A673 (cell line): ENCODE measurements at regions of chr11 and their contacts with region 1.

Region 1: DNA sequence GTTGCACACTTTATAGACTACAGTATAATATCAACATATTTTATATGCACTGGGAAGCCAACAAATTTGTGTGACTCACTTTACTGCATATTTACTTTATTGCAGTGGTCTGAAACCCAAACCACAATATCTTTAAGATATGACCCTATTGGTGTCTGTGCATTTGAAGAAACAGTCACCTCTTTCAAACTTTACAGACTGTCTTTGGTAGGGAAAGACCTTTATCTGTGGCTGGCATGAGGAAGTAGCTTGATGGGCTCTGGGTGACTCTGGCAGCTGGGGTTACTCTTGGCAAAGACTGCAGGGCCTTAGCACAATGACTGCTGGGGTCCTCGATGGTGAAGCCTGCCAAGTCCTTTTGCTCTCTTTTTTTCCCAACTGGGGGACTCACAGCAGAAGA is 21.3 kb upstream of the ABTB2 start:
- DNase-seq: no peak
- H3K4me3 ChIP-seq: no peak overlapping the region
- H3K27ac ChIP-seq: no peak overlapping the region
- H3K4me1 ChIP-seq: no peaks in the 10 kb centered on the region
- H3K27me3 ChIP-seq: no peaks in the 10 kb centered on the region
- CTCF ChIP-seq: no peak

Region 2: GRCh38 chr11:33940538-33940815 is 438.6 kb before region 1 on chr11:
- CTCF ChIA-PET with region 1: no interaction called
- POLR2A ChIA-PET with region 1: interaction called, 10 read pairs
- intact Hi-C with region 1: no loop called
- DNase-seq: no peak
- H3K4me3 ChIP-seq: no peak overlapping the region
- H3K27ac ChIP-seq: no peak overlapping the region
- H3K4me1 ChIP-seq: peaks cover 43% of the 10 kb centered on the region
- H3K27me3 ChIP-seq: no peaks in the 10 kb centered on the region
- CTCF ChIP-seq: no peak

Region 3: DNA sequence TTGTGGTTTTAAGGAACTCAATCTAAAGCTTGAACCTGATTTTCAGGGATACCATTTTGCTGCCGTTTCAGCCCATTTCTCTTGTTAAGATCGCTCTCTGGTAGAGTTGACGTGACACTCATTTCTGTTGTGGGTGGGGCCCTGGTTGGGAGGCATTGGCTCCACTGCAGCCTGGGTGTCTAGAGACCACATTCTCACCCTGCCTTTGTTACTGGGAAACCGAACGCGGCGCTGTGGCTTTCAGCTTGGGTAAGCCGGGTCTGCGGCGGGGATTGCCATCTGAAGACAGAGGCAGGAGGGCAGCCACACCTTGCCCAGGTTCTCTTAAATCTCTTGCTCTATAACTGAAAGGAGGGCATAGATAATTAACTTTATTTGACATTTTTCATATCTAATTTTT is 245.0 kb after region 1 on chr11:
- CTCF ChIA-PET with region 1: no interaction called
- POLR2A ChIA-PET with region 1: no interaction called
- intact Hi-C with region 1: no loop called
- DNase-seq: no peak
- H3K4me3 ChIP-seq: no peak overlapping the region
- H3K27ac ChIP-seq: no peak overlapping the region
- H3K4me1 ChIP-seq: no peaks in the 10 kb centered on the region
- H3K27me3 ChIP-seq: peaks cover 15% of the 10 kb centered on the region
- CTCF ChIP-seq: no peak